CD8-positive, alpha-beta memory T cell (primary cell): ENCODE measurements at regions of chr1 and their contacts with region 1.

Region 1: GRCh38 chr1:167268398-167268787 is 47.7 kb downstream of the POU2F1 start:
- DNase-seq: no peak
- H3K4me3 ChIP-seq: no peak overlapping the region
- H3K4me3 Mint-ChIP-seq: no peak overlapping the region
- H3K27ac ChIP-seq: no peak overlapping the region
- H3K27ac Mint-ChIP-seq: peak overlapping the region in 1 of 8 donors; percentile 37
- H3K4me1 ChIP-seq: peaks cover 23% of the 10 kb centered on the region
- H3K4me1 Mint-ChIP-seq: peaks cover 14 to 34% (median 33%) of the 10 kb centered on the region in 3 donors
- H3K27me3 ChIP-seq: no peaks in the 10 kb centered on the region
- H3K27me3 Mint-ChIP-seq: no peaks in the 10 kb centered on the region

Region 2: GRCh38 chr1:167280912-167281311 is 12.5 kb after region 1 on chr1:
- CTCF ChIA-PET with region 1: interaction called, 10 read pairs
- POLR2A ChIA-PET with region 1: no interaction called
- DNase-seq: no peak
- H3K4me3 ChIP-seq: no peak overlapping the region
- H3K4me3 Mint-ChIP-seq: no peak overlapping the region
- H3K27ac ChIP-seq: no peak overlapping the region
- H3K27ac Mint-ChIP-seq: no peak overlapping the region
- H3K4me1 ChIP-seq: no peaks in the 10 kb centered on the region
- H3K4me1 Mint-ChIP-seq: peaks cover 17 to 48% (median 32%) of the 10 kb centered on the region in 3 donors
- H3K27me3 ChIP-seq: no peaks in the 10 kb centered on the region
- H3K27me3 Mint-ChIP-seq: peaks cover 0 to 1% of the 10 kb centered on the region in 2 donors

Region 3: DNA sequence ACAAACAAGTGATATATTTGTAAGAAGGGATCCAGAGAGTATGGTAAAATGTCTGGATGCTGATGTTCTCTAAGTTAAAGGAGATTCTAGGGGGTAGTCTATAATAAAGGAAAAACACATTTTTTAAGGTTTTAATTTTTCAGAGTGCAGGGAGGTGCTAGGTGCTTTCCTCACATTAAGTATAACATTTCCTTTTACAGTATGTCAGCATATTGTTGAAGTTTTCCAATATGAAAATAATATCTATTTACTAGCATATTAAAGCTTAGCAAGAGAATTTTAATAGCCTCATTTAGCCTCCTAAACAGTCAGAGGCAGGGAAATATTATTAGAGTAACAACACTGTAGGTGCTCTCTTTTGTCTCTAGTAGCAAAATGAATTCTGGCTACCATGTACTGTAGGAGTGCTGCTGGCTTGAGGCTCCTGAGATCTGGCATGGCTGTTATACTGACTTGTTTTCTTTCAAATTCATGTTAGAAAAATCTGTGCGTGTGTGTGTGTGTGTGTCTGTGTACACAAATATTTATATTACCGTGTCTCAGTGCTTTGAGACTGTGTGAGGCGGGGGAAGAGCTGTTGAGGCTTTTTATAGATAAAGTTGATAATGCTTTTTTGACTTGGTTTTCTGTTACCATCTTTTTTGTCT is 23.3 kb after region 1 on chr1:
- CTCF ChIA-PET with region 1: no interaction called
- POLR2A ChIA-PET with region 1: no interaction called
- DNase-seq: no peak
- H3K4me3 ChIP-seq: no peak overlapping the region
- H3K4me3 Mint-ChIP-seq: no peak overlapping the region
- H3K27ac ChIP-seq: no peak overlapping the region
- H3K27ac Mint-ChIP-seq: peak overlapping the region in 1 of 8 donors; percentile 52
- H3K4me1 ChIP-seq: peaks cover 1% of the 10 kb centered on the region
- H3K4me1 Mint-ChIP-seq: peaks cover 14 to 38% (median 21%) of the 10 kb centered on the region in 3 donors
- H3K27me3 ChIP-seq: no peaks in the 10 kb centered on the region
- H3K27me3 Mint-ChIP-seq: no peaks in the 10 kb centered on the region

Region 4: DNA sequence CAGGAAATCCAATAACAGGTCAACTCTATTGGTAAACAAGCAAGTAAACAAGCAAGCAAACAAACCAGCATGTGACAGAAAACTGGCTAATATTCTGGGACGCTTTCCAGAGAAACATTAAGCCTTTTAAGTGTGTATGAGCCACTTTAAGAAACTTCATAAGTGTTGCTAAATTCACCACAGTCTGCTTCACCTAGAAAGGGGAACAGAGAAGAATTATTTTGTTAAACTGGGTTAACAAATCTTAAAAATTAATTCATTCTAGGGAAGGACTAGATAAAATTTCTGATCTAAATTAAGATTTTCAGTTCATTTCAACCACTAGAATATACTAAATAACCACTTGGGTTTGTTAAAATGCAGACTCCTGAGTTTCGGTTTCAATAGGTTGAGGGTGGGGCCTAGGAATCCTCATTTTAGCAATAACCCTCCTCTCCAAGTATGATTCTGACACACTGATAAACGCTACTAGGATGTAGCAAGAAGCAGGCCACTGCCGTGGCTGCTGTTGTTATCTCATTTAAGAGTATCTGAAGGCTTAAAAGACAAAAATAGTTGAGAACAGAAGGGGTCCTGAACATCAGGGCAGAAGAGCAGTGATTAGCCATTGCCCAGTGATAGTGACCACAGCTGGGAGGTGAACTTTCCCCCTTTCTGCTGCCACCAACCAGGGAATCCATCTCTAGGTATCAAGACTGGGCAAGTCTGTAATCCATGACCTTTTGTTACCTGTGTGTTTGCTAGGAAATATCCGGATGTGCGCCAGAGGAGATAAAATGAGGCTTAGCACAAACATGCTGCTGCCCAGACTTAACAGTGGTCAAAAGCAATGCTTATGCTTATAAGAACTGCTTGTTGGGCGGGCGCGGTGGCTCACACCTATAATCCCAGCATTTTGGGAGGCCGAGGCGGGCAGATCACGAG is 274.0 kb after region 1 on chr1:
- CTCF ChIA-PET with region 1: interaction called, 10 read pairs
- POLR2A ChIA-PET with region 1: no interaction called
- DNase-seq: no peak
- H3K4me3 ChIP-seq: no peak overlapping the region
- H3K4me3 Mint-ChIP-seq: no peak overlapping the region
- H3K27ac ChIP-seq: no peak overlapping the region
- H3K27ac Mint-ChIP-seq: no peak overlapping the region
- H3K4me1 ChIP-seq: no peaks in the 10 kb centered on the region
- H3K4me1 Mint-ChIP-seq: peaks cover 4 to 22% (median 19%) of the 10 kb centered on the region in 3 donors
- H3K27me3 ChIP-seq: no peaks in the 10 kb centered on the region
- H3K27me3 Mint-ChIP-seq: no peaks in the 10 kb centered on the region

Region 5: DNA sequence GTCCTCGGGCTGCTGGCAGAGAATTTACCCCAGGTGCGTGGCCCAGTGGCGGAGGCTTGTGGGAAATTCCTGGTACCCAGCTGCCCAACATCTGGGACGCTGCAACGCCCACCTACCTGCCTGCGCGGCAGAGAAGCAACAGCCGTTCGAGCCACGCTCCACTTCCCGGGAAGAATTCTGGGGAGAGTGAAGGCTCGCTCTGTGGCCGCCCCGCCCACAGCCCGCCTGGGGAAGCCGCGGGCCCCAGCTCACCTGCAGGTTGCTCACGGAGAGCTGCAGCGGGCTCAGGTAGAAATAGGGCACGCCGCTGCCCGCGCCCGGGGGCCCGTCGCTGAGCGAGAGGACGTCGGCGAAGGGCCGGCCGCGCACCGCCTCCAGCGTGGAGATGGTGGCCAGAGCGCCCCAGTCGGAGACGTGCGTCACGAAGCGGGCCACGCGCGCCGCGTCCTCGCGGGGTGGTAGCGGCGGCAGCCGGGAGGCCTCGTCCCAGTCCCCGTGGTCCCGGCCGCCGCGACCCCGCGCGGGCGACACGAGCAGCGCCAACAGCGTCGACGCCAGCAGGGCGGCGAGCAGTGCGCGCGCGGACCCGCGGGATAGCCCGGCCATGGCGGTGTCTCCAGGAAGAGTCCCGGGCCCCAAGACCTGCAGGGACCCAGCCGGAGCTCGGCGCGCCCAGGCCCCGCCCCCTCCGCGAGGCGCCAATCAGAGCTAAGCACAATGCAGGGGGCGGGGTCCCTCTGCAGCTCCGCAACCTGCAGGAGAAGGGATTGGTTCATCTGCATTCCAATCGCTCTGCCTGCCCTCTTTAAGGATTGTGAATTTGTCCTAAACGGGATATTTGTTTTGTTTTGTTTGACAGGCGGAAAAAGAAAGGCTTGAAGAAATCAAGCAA is 285.0 kb after region 1 on chr1 and contains the start of gene CREG1:
- CTCF ChIA-PET with region 1: interaction called, 12 read pairs
- POLR2A ChIA-PET with region 1: no interaction called
- DNase-seq: peak; percentile 85 to 91 (median 88)
- H3K4me3 ChIP-seq: peak within 1 kb of the TSS; percentile 69
- H3K4me3 Mint-ChIP-seq: peak within 1 kb of the TSS; percentile 80 to 95 (median 89)
- H3K27ac ChIP-seq: peak within 1 kb of the TSS; percentile 62
- H3K27ac Mint-ChIP-seq: peak within 1 kb of the TSS; percentile 5 to 95 (median 66)
- H3K4me1 ChIP-seq: peaks cover 27% of the 10 kb centered on the region
- H3K4me1 Mint-ChIP-seq: peaks cover 33 to 46% (median 37%) of the 10 kb centered on the region in 3 donors
- H3K27me3 ChIP-seq: no peaks in the 10 kb centered on the region
- H3K27me3 Mint-ChIP-seq: peaks cover 0 to 4% of the 10 kb centered on the region in 2 donors
- total RNA-seq, gene CREG1: 14.6 to 15.3 TPM